ENCODE measurements at regions of chr12 and their contacts with region 1.

Region 1: DNA sequence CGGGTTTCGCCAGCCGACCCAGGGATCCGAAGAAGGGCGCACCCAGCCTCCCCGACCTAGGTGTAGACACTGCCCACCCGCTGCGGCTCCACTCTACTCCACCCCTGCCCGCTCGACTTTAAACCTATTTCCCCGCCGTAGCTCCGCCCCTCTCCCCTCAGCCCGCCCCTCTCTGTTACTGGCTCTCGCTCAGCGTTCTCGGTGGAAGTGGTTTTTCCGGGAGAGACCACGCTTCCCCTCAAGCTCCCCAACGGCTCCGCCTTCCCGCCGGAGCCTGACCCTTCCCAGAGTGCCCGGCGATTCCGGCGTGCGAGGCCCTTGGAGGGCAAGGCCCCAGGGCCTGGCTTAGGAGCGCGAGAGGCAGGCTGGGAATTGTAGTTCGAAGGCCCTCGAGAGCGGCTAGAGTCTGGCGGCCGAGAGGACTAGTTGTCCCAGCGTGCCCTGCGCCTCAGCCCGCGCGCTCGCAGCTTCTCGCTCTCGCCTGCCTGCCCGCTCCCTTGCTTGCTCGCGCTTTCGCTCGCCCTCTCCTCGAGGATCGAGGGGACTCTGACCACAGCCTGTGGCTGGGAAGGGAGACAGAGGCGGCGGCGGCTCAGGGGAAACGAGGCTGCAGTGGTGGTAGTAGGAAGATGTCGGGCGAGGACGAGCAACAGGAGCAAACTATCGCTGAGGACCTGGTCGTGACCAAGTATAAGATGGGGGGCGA is at the start of gene PA2G4:
- DNase-seq: peak; percentile 91 to 99 (median 96)
- ATAC-seq: peak; percentile 88
- H3K4me3 ChIP-seq: peak within 1 kb of the TSS; percentile 90
- H3K4me3 Mint-ChIP-seq: peak within 1 kb of the TSS; percentile 99
- H3K27ac ChIP-seq: peak within 1 kb of the TSS; percentile 53 to 70
- H3K27ac Mint-ChIP-seq: peak within 1 kb of the TSS; percentile 98
- H3K4me1 ChIP-seq: peaks cover 37% of the 10 kb centered on the region
- H3K4me1 Mint-ChIP-seq: peaks cover 66% of the 10 kb centered on the region
- H3K27me3 ChIP-seq: no peaks in the 10 kb centered on the region
- H3K27me3 Mint-ChIP-seq: no peaks in the 10 kb centered on the region
- CTCF ChIP-seq: no peak
- total RNA-seq, gene PA2G4: 61.6 to 62.4 TPM

Region 2: DNA sequence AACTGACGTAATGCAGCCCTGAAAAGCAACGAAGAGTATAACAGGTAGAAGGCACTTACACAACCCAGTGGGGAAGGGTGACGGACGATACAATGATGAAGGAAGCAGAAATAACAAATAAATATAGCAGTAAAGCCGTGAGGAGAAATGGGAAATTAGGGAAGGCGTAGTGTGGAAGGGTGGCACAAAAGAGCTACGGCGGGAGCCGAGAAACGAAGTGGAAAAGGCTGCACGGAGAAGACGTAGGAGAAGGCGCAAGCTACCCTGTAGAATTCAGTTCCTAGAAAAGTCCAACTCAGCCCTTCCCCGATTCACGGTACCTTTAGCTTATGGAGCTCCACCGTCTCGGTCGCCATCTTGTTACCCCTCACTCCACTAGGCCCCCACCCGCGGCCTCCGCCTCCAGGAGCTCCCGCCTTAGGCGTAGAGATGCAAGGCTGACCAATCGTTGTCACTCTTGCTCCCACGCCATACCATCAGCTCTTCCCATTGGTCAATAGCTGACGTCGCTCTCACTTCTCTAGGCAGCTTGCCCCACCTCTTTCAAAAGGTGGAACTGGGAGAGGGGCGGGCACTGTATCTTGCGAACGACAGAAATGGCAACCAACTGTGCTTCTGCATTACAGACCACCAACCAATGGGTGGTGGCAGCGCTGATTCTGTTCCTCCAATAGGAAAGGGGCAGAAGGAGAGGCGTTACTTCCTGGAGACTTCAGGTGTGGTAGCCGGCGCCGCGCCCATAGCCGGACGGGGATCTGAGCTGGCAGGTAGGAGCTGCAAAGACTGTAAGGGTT is 286.7 kb before region 1 on chr12 and contains the starts of genes ORMDL2 and SARNP:
- CTCF ChIA-PET with region 1: no interaction called
- POLR2A ChIA-PET with region 1: interaction called, 6 read pairs
- intact Hi-C with region 1: loop called in 1 of 2 experiments (anchors 5 kb)
- DNase-seq: peak; percentile 88 to 100 (median 94)
- ATAC-seq: peak; percentile 91
- H3K4me3 ChIP-seq: peak within 1 kb of the TSS; percentile 81 to 89
- H3K4me3 Mint-ChIP-seq: no peak within 1 kb of the TSS
- H3K27ac ChIP-seq: peak within 1 kb of the TSS; percentile 81 to 89
- H3K27ac Mint-ChIP-seq: no peak within 1 kb of the TSS
- H3K4me1 ChIP-seq: peaks cover 38% of the 10 kb centered on the region
- H3K4me1 Mint-ChIP-seq: peaks cover 44% of the 10 kb centered on the region
- H3K27me3 ChIP-seq: no peaks in the 10 kb centered on the region
- H3K27me3 Mint-ChIP-seq: no peaks in the 10 kb centered on the region
- CTCF ChIP-seq: no peak
- total RNA-seq, gene ORMDL2: 13.2 to 15.1 TPM
- total RNA-seq, gene SARNP: 48.0 to 50.3 TPM

Region 3: DNA sequence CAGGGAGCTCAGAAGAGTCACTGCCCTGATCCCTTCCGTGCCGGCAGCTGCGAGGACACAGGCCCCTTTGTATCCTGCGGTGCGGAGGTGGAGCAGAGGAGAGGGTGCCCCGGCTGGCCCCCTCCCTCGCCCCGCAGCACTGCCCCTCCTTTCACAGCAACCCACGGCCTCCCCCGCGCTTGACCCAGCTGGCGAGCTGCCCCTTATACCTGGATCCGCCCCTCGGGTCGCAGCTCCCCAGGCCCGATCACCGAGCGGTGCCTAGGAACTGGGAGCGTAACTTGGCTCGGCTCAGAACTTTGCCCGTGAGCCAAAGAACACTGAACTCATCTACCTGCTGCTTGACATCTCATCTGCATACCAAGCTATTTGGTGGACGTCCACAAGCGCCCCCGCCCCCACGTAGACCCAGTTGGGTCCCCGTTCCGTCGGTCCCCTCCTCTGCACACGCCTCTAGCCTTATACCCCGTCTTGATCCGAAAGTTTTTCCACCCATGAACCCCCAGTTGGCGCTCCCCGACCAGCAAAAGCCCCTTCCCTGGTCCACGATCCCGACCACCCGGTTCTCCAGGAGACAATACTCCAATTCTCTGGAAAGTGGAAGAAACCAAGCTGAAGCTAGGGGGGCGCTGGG is 274.2 kb before region 1 on chr12:
- CTCF ChIA-PET with region 1: no interaction called
- POLR2A ChIA-PET with region 1: no interaction called
- intact Hi-C with region 1: loop called in 1 of 2 experiments (anchors 5 kb)
- DNase-seq: peak in 7 of 9 experiments; percentile 15 to 63 (median 48)
- ATAC-seq: peak; percentile 16
- H3K4me3 ChIP-seq: peak overlapping the region; percentile 65 to 93
- H3K4me3 Mint-ChIP-seq: peak overlapping the region; percentile 99
- H3K27ac ChIP-seq: peak overlapping the region; percentile 71 to 79
- H3K27ac Mint-ChIP-seq: peak overlapping the region; percentile 95
- H3K4me1 ChIP-seq: peaks cover 45% of the 10 kb centered on the region
- H3K4me1 Mint-ChIP-seq: peaks cover 56% of the 10 kb centered on the region
- H3K27me3 ChIP-seq: no peaks in the 10 kb centered on the region
- H3K27me3 Mint-ChIP-seq: no peaks in the 10 kb centered on the region
- CTCF ChIP-seq: no peak

Region 4: DNA sequence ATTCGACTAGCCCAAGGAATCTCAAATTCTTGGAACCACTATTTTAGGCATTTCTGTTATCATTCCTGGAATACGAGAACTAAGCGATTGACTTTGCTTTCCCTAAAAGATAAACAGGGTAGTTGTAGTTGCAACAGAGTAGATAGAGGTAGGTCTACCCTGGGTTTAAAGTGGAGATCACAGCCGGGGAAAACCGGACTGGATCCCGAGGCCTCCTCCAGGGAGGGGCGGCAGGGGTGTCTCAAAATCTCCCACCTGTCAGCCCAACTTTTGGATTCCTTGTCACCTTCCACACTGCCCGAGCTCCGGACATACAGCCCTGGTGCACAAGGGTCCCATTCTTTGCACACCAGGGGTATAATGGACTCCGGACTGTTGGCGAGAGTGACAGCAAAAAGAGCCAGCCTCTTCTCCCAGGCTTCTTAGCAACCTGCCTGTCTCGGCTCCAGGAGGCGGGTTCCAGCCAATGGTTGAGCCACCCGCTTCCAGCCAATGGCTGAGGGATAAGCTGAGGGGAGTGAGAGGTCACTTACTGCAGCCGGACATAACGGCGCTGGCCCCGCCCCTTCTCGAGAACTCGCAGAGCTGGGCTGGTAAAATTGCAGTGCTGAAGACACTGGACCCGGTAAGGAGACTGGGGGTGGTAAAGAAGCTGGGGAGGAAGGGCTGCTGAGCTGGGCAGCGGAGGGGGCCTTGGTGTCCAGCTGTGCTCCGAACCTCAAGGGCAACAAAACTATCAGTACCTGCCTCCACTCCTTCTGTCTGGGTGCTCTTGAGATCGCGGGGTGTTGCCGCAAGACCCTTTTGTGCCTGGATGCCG is 107.3 kb before region 1 on chr12 and contains the start of gene SUOX:
- CTCF ChIA-PET with region 1: interaction called, 8 read pairs
- POLR2A ChIA-PET with region 1: interaction called, 6 read pairs
- intact Hi-C with region 1: loop called in 1 of 2 experiments (anchors 2 kb)
- DNase-seq: peak in 6 of 9 experiments; percentile 7 to 52 (median 26)
- ATAC-seq: no peak
- H3K4me3 ChIP-seq: peak within 1 kb of the TSS; percentile 14 to 34
- H3K4me3 Mint-ChIP-seq: peak within 1 kb of the TSS; percentile 66
- H3K27ac ChIP-seq: no peak within 1 kb of the TSS
- H3K27ac Mint-ChIP-seq: no peak within 1 kb of the TSS
- H3K4me1 ChIP-seq: peaks cover 14% of the 10 kb centered on the region
- H3K4me1 Mint-ChIP-seq: peaks cover 23% of the 10 kb centered on the region
- H3K27me3 ChIP-seq: peaks cover 0 to 12% of the 10 kb centered on the region in 2 experiments
- H3K27me3 Mint-ChIP-seq: peaks cover 6% of the 10 kb centered on the region
- CTCF ChIP-seq: no peak
- total RNA-seq, gene SUOX: 0.72 to 1.2 TPM

Region 5: GRCh38 chr12:56078990-56079664 is 25.1 kb before region 1 on chr12:
- CTCF ChIA-PET with region 1: interaction called, 11 read pairs
- POLR2A ChIA-PET with region 1: interaction called, 15 read pairs
- intact Hi-C with region 1: loop called (anchors 1 kb)
- DNase-seq: peak; percentile 10 to 74 (median 52)
- ATAC-seq: peak; percentile 64
- H3K4me3 ChIP-seq: peak overlapping the region; percentile 60 to 72
- H3K4me3 Mint-ChIP-seq: peak overlapping the region; percentile 85
- H3K27ac ChIP-seq: no peak overlapping the region
- H3K27ac Mint-ChIP-seq: no peak overlapping the region
- H3K4me1 ChIP-seq: peaks cover 18% of the 10 kb centered on the region
- H3K4me1 Mint-ChIP-seq: peaks cover 14% of the 10 kb centered on the region
- H3K27me3 ChIP-seq: peaks cover 3 to 12% of the 10 kb centered on the region in 2 experiments
- H3K27me3 Mint-ChIP-seq: peaks cover 2% of the 10 kb centered on the region
- CTCF ChIP-seq: peak; percentile 56

Region 6: GRCh38 chr12:56152318-56153033 is 48.2 kb after region 1 on chr12 and contains the start of gene MYL6B:
- CTCF ChIA-PET with region 1: interaction called, 3 read pairs
- POLR2A ChIA-PET with region 1: interaction called, 3 read pairs
- intact Hi-C with region 1: loop called in 1 of 2 experiments (anchors 1 kb)
- DNase-seq: peak; percentile 80 to 96 (median 93)
- ATAC-seq: peak; percentile 90
- H3K4me3 ChIP-seq: peak within 1 kb of the TSS; percentile 65 to 95
- H3K4me3 Mint-ChIP-seq: peak within 1 kb of the TSS; percentile 90
- H3K27ac ChIP-seq: peak within 1 kb of the TSS; percentile 75 to 90
- H3K27ac Mint-ChIP-seq: peak within 1 kb of the TSS; percentile 99
- H3K4me1 ChIP-seq: peaks cover 30% of the 10 kb centered on the region
- H3K4me1 Mint-ChIP-seq: peaks cover 29% of the 10 kb centered on the region
- H3K27me3 ChIP-seq: no peaks in the 10 kb centered on the region
- H3K27me3 Mint-ChIP-seq: no peaks in the 10 kb centered on the region
- CTCF ChIP-seq: no peak
- total RNA-seq, gene MYL6B: 4.0 to 5.9 TPM

Region 7: GRCh38 chr12:56266693-56267442 is 162.6 kb after region 1 on chr12 and contains the start of gene COQ10A:
- CTCF ChIA-PET with region 1: interaction called, 3 read pairs
- POLR2A ChIA-PET with region 1: no interaction called
- intact Hi-C with region 1: loop called in 1 of 2 experiments (anchors 1 kb)
- DNase-seq: peak; percentile 77 to 95 (median 92)
- ATAC-seq: peak; percentile 87
- H3K4me3 ChIP-seq: peak within 1 kb of the TSS; percentile 87 to 89
- H3K4me3 Mint-ChIP-seq: peak within 1 kb of the TSS; percentile 92
- H3K27ac ChIP-seq: peak within 1 kb of the TSS; percentile 95 to 98
- H3K27ac Mint-ChIP-seq: peak within 1 kb of the TSS; percentile 92
- H3K4me1 ChIP-seq: peaks cover 12% of the 10 kb centered on the region
- H3K4me1 Mint-ChIP-seq: peaks cover 20% of the 10 kb centered on the region
- H3K27me3 ChIP-seq: no peaks in the 10 kb centered on the region
- H3K27me3 Mint-ChIP-seq: no peaks in the 10 kb centered on the region
- CTCF ChIP-seq: peak; percentile 66
- total RNA-seq, gene COQ10A: 29.5 to 38.8 TPM

Measured in CD8-positive, alpha-beta T cell (primary cell).